Keratinocyte (primary cell): ENCODE measurements at regions of chrX and their contacts with region 1.

Region 1: DNA sequence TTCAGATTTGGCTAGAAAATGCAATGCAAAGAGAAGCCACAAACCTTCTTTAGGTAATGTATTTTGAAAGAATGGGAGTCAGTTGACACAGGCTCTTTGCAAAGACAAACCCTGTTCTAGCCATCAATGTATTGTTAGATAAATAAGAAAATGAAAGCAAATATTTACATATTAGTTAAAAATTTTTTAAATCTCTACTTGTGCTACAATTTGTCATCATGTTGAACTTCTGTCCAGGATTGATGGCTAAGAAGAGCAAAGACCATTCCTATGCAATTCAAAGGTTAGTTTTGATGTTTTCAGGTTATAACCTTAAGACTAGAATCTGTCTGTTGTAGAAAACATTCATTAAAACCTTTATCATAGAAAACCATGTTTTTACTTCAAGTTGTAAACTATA is 788.8 kb upstream of the FTHL17 start:
- DNase-seq: no peak
- H3K4me3 ChIP-seq: no peak overlapping the region
- H3K27ac ChIP-seq: no peak overlapping the region
- H3K4me1 ChIP-seq: no peaks in the 10 kb centered on the region
- H3K27me3 ChIP-seq: no peaks in the 10 kb centered on the region
- CTCF ChIP-seq: no peak

Region 2: GRCh38 chrX:31307952-31308351 is 552.7 kb before region 1 on chrX:
- dilution Hi-C with region 1: no loop called
- DNase-seq: no peak
- H3K4me3 ChIP-seq: no peak overlapping the region
- H3K27ac ChIP-seq: no peak overlapping the region
- H3K4me1 ChIP-seq: no peaks in the 10 kb centered on the region
- H3K27me3 ChIP-seq: no peaks in the 10 kb centered on the region
- CTCF ChIP-seq: no peak

Region 3: GRCh38 chrX:31909850-31910547 is 49.3 kb after region 1 on chrX:
- dilution Hi-C with region 1: loop called (anchors 5 kb)
- DNase-seq: no peak
- H3K4me3 ChIP-seq: no peak overlapping the region
- H3K27ac ChIP-seq: no peak overlapping the region
- H3K4me1 ChIP-seq: no peaks in the 10 kb centered on the region
- H3K27me3 ChIP-seq: no peaks in the 10 kb centered on the region
- CTCF ChIP-seq: no peak